Naive thymus-derived CD4-positive, alpha-beta T cell (primary cell): ENCODE measurements at regions of chr7 and their contacts with region 1.

Region 1: GRCh38 chr7:87059525-87060287 is at the start of gene ELAPOR2:
- DNase-seq: peak; percentile 68 to 83 (median 75)
- ATAC-seq: peak; percentile 97
- H3K4me3 ChIP-seq: peak within 1 kb of the TSS; percentile 66
- H3K4me3 Mint-ChIP-seq: peak within 1 kb of the TSS; percentile 78 to 88 (median 84)
- H3K27ac ChIP-seq: peak within 1 kb of the TSS; percentile 52
- H3K27ac Mint-ChIP-seq: peak within 1 kb of the TSS in 8 of 9 donors; percentile 6 to 89 (median 70)
- H3K4me1 ChIP-seq: peaks cover 9 to 10% of the 10 kb centered on the region in 2 donors
- H3K4me1 Mint-ChIP-seq: peaks cover 7 to 18% (median 14%) of the 10 kb centered on the region in 7 donors
- H3K27me3 ChIP-seq: no peaks in the 10 kb centered on the region
- H3K27me3 Mint-ChIP-seq: peaks cover 9 to 23% (median 14%) of the 10 kb centered on the region in 5 donors
- total RNA-seq, gene ELAPOR2: 5.3 to 11.0 (median 6.4) TPM

Region 2: GRCh38 chr7:86058649-86059048 is 1001.1 kb before region 1 on chr7:
- CTCF ChIA-PET with region 1: no interaction called
- POLR2A ChIA-PET with region 1: no interaction called
- intact Hi-C with region 1: no loop called
- DNase-seq: no peak
- ATAC-seq: no peak
- H3K4me3 ChIP-seq: no peak overlapping the region
- H3K4me3 Mint-ChIP-seq: no peak overlapping the region
- H3K27ac ChIP-seq: no peak overlapping the region
- H3K27ac Mint-ChIP-seq: no peak overlapping the region
- H3K4me1 ChIP-seq: no peaks in the 10 kb centered on the region
- H3K4me1 Mint-ChIP-seq: no peaks in the 10 kb centered on the region
- H3K27me3 ChIP-seq: no peaks in the 10 kb centered on the region
- H3K27me3 Mint-ChIP-seq: no peaks in the 10 kb centered on the region

Region 3: GRCh38 chr7:86926732-86927131 is 133.0 kb before region 1 on chr7:
- CTCF ChIA-PET with region 1: no interaction called
- POLR2A ChIA-PET with region 1: no interaction called
- intact Hi-C with region 1: loop called in 1 of 2 experiments (anchors 5 kb)
- DNase-seq: peak in 7 of 9 donors; percentile 25 to 56 (median 38)
- ATAC-seq: peak; percentile 84
- H3K4me3 ChIP-seq: no peak overlapping the region
- H3K4me3 Mint-ChIP-seq: no peak overlapping the region
- H3K27ac ChIP-seq: no peak overlapping the region
- H3K27ac Mint-ChIP-seq: peak overlapping the region in 2 of 9 donors; percentile 28 to 53
- H3K4me1 ChIP-seq: no peaks in the 10 kb centered on the region
- H3K4me1 Mint-ChIP-seq: no peaks in the 10 kb centered on the region
- H3K27me3 ChIP-seq: no peaks in the 10 kb centered on the region
- H3K27me3 Mint-ChIP-seq: peaks cover 0 to 16% (median 4%) of the 10 kb centered on the region in 5 donors

Region 4: GRCh38 chr7:88140947-88141346 is 1081.2 kb after region 1 on chr7:
- CTCF ChIA-PET with region 1: no interaction called
- POLR2A ChIA-PET with region 1: no interaction called
- intact Hi-C with region 1: no loop called
- DNase-seq: no peak
- ATAC-seq: no peak
- H3K4me3 ChIP-seq: no peak overlapping the region
- H3K4me3 Mint-ChIP-seq: no peak overlapping the region
- H3K27ac ChIP-seq: no peak overlapping the region
- H3K27ac Mint-ChIP-seq: no peak overlapping the region
- H3K4me1 ChIP-seq: no peaks in the 10 kb centered on the region
- H3K4me1 Mint-ChIP-seq: no peaks in the 10 kb centered on the region
- H3K27me3 ChIP-seq: no peaks in the 10 kb centered on the region
- H3K27me3 Mint-ChIP-seq: peaks cover 0 to 4% (median 0%) of the 10 kb centered on the region in 5 donors